PC-3 (cell line): ENCODE measurements at regions of chr3 and their contacts with region 1.

Region 1: GRCh38 chr3:11803977-11804892 is 42.5 kb downstream of the TAMM41 start:
- DNase-seq: peak; percentile 67
- ATAC-seq: peak; percentile 82
- H3K4me3 ChIP-seq: no peak overlapping the region
- H3K27ac ChIP-seq: no peak overlapping the region
- H3K4me1 ChIP-seq: no peaks in the 10 kb centered on the region; the same call in 1 of the 2 replicates
- H3K27me3 ChIP-seq: no peaks in the 10 kb centered on the region
- CTCF ChIP-seq: peak; percentile 87

Region 2: GRCh38 chr3:11671648-11672100 is 132.6 kb before region 1 on chr3:
- CTCF ChIA-PET with region 1: no interaction called
- POLR2A ChIA-PET with region 1: no interaction called
- intact Hi-C with region 1: loop called (anchors 5 kb)
- DNase-seq: peak; percentile 76
- ATAC-seq: peak; percentile 86
- H3K4me3 ChIP-seq: no peak overlapping the region
- H3K27ac ChIP-seq: peak overlapping the region; percentile 22
- H3K4me1 ChIP-seq: peaks cover 17% of the 10 kb centered on the region
- H3K27me3 ChIP-seq: no peaks in the 10 kb centered on the region
- CTCF ChIP-seq: no peak

Region 3: GRCh38 chr3:11846281-11847034 is 42.2 kb after region 1 on chr3 and contains the start of gene TAMM41:
- CTCF ChIA-PET with region 1: no interaction called
- POLR2A ChIA-PET with region 1: no interaction called
- intact Hi-C with region 1: no loop called
- DNase-seq: peak; percentile 93
- ATAC-seq: peak; percentile 98
- H3K4me3 ChIP-seq: peak within 1 kb of the TSS; percentile 99
- H3K27ac ChIP-seq: peak within 1 kb of the TSS; percentile 60
- H3K4me1 ChIP-seq: peaks cover 13% of the 10 kb centered on the region; the same call in 1 of the 2 replicates
- H3K27me3 ChIP-seq: peaks cover under 1% of the 10 kb centered on the region; the same call in 1 of the 2 replicates
- CTCF ChIP-seq: peak; percentile 82
- total RNA-seq, gene TAMM41: 10.0 and 10.5 TPM in 2 replicates